ENCODE measurements at regions of chr13 and their contacts with region 1.

Region 1: GRCh38 chr13:31161828-31162590 is at the start of gene HSPH1:
- DNase-seq: peak; percentile 95 to 100 (median 99)
- ATAC-seq: peak; percentile 91
- H3K4me3 ChIP-seq: peak within 1 kb of the TSS; percentile 89
- H3K4me3 Mint-ChIP-seq: peak within 1 kb of the TSS; percentile 92 to 98 (median 94)
- H3K27ac ChIP-seq: peak within 1 kb of the TSS; percentile 96
- H3K27ac Mint-ChIP-seq: peak within 1 kb of the TSS; percentile 98 to 99 (median 99)
- H3K4me1 ChIP-seq: peaks cover 22 to 26% of the 10 kb centered on the region in 2 donors
- H3K4me1 Mint-ChIP-seq: peaks cover 23 to 52% (median 47%) of the 10 kb centered on the region in 7 donors
- H3K27me3 ChIP-seq: no peaks in the 10 kb centered on the region
- H3K27me3 Mint-ChIP-seq: peaks cover 0 to 3% (median 0%) of the 10 kb centered on the region in 5 donors
- total RNA-seq, gene HSPH1: 65.5 to 154 (median 107) TPM

Region 2: GRCh38 chr13:29595380-29596063 is 1566.5 kb before region 1 on chr13 and contains the start of gene SLC7A1:
- CTCF ChIA-PET with region 1: no interaction called
- POLR2A ChIA-PET with region 1: no interaction called
- intact Hi-C with region 1: loop called (anchors 1 to 2 kb)
- DNase-seq: peak; percentile 74 to 93 (median 85)
- ATAC-seq: peak; percentile 95
- H3K4me3 ChIP-seq: peak within 1 kb of the TSS; percentile 73
- H3K4me3 Mint-ChIP-seq: peak within 1 kb of the TSS; percentile 88 to 94 (median 90)
- H3K27ac ChIP-seq: peak within 1 kb of the TSS; percentile 82
- H3K27ac Mint-ChIP-seq: peak within 1 kb of the TSS; percentile 74 to 96 (median 87)
- H3K4me1 ChIP-seq: peaks cover 6 to 7% of the 10 kb centered on the region in 2 donors
- H3K4me1 Mint-ChIP-seq: peaks cover 26 to 49% (median 43%) of the 10 kb centered on the region in 7 donors
- H3K27me3 ChIP-seq: no peaks in the 10 kb centered on the region
- H3K27me3 Mint-ChIP-seq: peaks cover 0 to 3% (median 2%) of the 10 kb centered on the region in 5 donors
- total RNA-seq, gene SLC7A1: 12.2 to 63.8 (median 28.2) TPM

Region 3: GRCh38 chr13:30306762-30307193 is 855.2 kb before region 1 on chr13:
- CTCF ChIA-PET with region 1: no interaction called
- POLR2A ChIA-PET with region 1: no interaction called
- intact Hi-C with region 1: loop called in 1 of 2 experiments (anchors 2 kb)
- DNase-seq: peak; percentile 78 to 91 (median 88)
- ATAC-seq: peak; percentile 95
- H3K4me3 ChIP-seq: peak overlapping the region; percentile 96
- H3K4me3 Mint-ChIP-seq: peak overlapping the region; percentile 79 to 92 (median 89)
- H3K27ac ChIP-seq: peak overlapping the region; percentile 78
- H3K27ac Mint-ChIP-seq: peak overlapping the region in 8 of 9 donors; percentile 37 to 89 (median 82)
- H3K4me1 ChIP-seq: peaks cover 0 to 4% of the 10 kb centered on the region in 2 donors
- H3K4me1 Mint-ChIP-seq: peaks cover 0 to 48% (median 7%) of the 10 kb centered on the region in 7 donors
- H3K27me3 ChIP-seq: no peaks in the 10 kb centered on the region
- H3K27me3 Mint-ChIP-seq: no peaks in the 10 kb centered on the region

Region 4: DNA sequence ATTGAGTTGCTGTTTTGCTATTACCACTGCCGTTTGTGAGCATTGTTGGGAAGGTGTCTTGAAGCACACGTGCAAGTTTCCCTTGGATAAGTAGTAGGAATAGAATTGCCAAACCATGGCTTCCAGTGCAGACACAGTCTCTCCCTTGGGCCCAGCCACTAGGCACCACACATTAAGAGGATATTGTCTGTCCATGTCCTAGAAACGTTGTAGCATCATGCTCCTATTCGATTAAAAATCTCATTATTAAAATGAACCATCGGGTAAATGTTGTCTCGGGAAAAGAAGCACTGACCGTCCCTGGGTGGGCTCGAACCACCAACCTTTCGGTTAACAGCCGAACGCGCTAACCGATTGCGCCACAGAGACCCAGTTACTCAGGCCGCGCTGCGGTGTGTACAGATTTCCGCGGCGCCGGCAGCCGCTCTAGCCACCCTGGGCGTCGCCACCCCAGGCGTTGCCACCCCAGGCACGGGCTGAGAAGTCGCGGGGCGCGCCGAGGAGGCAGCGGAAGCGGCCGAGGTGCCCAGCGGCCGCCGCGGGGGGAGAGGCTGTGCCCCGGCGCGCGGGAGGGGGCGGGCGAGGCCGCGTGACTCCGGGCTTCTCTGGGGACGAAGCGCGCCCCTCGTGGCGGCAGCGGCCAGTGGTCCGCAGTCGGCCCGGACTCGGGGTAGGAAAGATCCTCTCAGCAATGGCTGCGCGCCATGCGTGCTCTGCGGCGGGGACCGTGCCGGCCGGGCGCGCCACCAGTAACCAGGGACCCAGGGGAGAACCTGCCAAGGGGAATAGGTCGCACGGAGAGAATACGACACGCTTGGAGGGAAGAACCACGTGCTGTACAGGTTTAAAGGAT is 488.1 kb before region 1 on chr13:
- CTCF ChIA-PET with region 1: no interaction called
- POLR2A ChIA-PET with region 1: no interaction called
- intact Hi-C with region 1: loop called in 1 of 2 experiments (anchors 2 kb)
- DNase-seq: peak; percentile 79 to 94 (median 86)
- ATAC-seq: peak; percentile 97
- H3K4me3 ChIP-seq: peak overlapping the region; percentile 67
- H3K4me3 Mint-ChIP-seq: peak overlapping the region; percentile 72 to 90 (median 88)
- H3K27ac ChIP-seq: peak overlapping the region; percentile 38
- H3K27ac Mint-ChIP-seq: peak overlapping the region; percentile 81 to 98 (median 91)
- H3K4me1 ChIP-seq: peaks cover 0 to 5% of the 10 kb centered on the region in 2 donors
- H3K4me1 Mint-ChIP-seq: peaks cover 2 to 32% (median 15%) of the 10 kb centered on the region in 7 donors
- H3K27me3 ChIP-seq: no peaks in the 10 kb centered on the region
- H3K27me3 Mint-ChIP-seq: peaks cover 0 to 36% (median 0%) of the 10 kb centered on the region in 5 donors

Region 5: DNA sequence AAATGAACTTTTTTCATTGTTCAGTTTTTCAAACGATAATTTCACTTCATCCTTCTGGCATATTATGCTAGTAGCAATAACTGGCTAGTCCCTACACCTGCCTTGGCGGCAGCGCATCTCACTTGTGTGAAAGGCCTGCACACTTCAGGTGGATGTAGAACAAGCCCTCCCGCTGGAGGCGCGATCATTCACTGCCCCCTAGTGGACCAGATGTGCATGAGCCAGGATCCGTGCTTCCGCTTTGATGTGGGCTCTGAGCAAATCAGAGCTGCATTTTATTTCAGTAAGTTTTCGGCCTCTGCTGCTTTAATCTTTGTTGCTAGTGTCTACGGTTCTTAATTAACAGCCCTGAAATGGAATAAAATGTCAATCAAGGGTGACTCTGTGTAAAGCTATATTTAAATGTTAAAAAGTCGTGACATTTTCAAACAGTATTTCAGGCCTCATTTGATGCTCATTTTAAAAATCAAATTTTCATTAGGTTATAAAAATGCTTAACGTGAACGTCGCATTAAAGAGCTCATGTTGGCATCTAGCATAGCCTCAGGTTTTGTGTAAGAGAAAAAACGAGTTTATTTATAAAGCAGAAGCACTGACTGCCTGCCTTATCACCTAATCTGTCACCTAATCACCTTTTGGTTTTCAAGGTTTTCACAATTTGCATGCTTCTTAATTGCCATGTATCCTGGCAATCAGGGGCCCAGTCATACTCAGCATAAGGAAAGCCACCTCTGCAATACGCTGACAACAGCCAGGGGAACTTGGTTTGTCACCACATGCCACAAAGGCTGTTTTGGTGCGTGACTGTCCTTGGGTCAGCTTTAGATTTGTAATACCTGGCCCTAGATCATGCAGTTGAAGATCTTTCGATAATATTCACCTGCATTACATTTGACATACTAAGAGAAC is 117.4 kb before region 1 on chr13:
- CTCF ChIA-PET with region 1: no interaction called
- POLR2A ChIA-PET with region 1: no interaction called
- intact Hi-C with region 1: loop called (anchors 1 to 2 kb)
- DNase-seq: peak; percentile 54 to 79 (median 75)
- ATAC-seq: peak; percentile 95
- H3K4me3 ChIP-seq: no peak overlapping the region
- H3K4me3 Mint-ChIP-seq: peak overlapping the region in 9 of 10 donors; percentile 19 to 81 (median 52)
- H3K27ac ChIP-seq: no peak overlapping the region
- H3K27ac Mint-ChIP-seq: peak overlapping the region in 5 of 9 donors; percentile 7 to 90 (median 46)
- H3K4me1 ChIP-seq: peaks cover 22 to 30% of the 10 kb centered on the region in 2 donors
- H3K4me1 Mint-ChIP-seq: peaks cover 22 to 52% (median 40%) of the 10 kb centered on the region in 7 donors
- H3K27me3 ChIP-seq: no peaks in the 10 kb centered on the region
- H3K27me3 Mint-ChIP-seq: peaks cover 0 to 24% (median 5%) of the 10 kb centered on the region in 5 donors

Region 6: GRCh38 chr13:31174018-31174417 is 12.0 kb after region 1 on chr13:
- CTCF ChIA-PET with region 1: no interaction called
- POLR2A ChIA-PET with region 1: no interaction called
- intact Hi-C with region 1: loop called in 1 of 2 experiments (anchors 1 kb)
- DNase-seq: no peak
- ATAC-seq: no peak
- H3K4me3 ChIP-seq: no peak overlapping the region
- H3K4me3 Mint-ChIP-seq: no peak overlapping the region
- H3K27ac ChIP-seq: no peak overlapping the region
- H3K27ac Mint-ChIP-seq: no peak overlapping the region
- H3K4me1 ChIP-seq: no peaks in the 10 kb centered on the region
- H3K4me1 Mint-ChIP-seq: peaks cover 0 to 18% (median 4%) of the 10 kb centered on the region in 7 donors
- H3K27me3 ChIP-seq: no peaks in the 10 kb centered on the region
- H3K27me3 Mint-ChIP-seq: peaks cover 10 to 21% (median 15%) of the 10 kb centered on the region in 5 donors

Region 7: GRCh38 chr13:31352467-31352866 is 190.5 kb after region 1 on chr13:
- CTCF ChIA-PET with region 1: no interaction called
- POLR2A ChIA-PET with region 1: no interaction called
- intact Hi-C with region 1: no loop called
- DNase-seq: no peak
- ATAC-seq: no peak
- H3K4me3 ChIP-seq: no peak overlapping the region
- H3K4me3 Mint-ChIP-seq: no peak overlapping the region
- H3K27ac ChIP-seq: no peak overlapping the region
- H3K27ac Mint-ChIP-seq: no peak overlapping the region
- H3K4me1 ChIP-seq: no peaks in the 10 kb centered on the region
- H3K4me1 Mint-ChIP-seq: no peaks in the 10 kb centered on the region
- H3K27me3 ChIP-seq: no peaks in the 10 kb centered on the region
- H3K27me3 Mint-ChIP-seq: peaks cover 4 to 38% (median 20%) of the 10 kb centered on the region in 5 donors

Region 8: GRCh38 chr13:31846182-31846950 is 684.4 kb after region 1 on chr13:
- CTCF ChIA-PET with region 1: no interaction called
- POLR2A ChIA-PET with region 1: no interaction called
- intact Hi-C with region 1: no loop called
- DNase-seq: peak in 7 of 9 donors; percentile 1 to 86 (median 14)
- ATAC-seq: peak; percentile 96
- H3K4me3 ChIP-seq: no peak overlapping the region
- H3K4me3 Mint-ChIP-seq: peak overlapping the region; percentile 47 to 91 (median 74)
- H3K27ac ChIP-seq: no peak overlapping the region
- H3K27ac Mint-ChIP-seq: peak overlapping the region in 1 of 9 donors; percentile 43
- H3K4me1 ChIP-seq: no peaks in the 10 kb centered on the region
- H3K4me1 Mint-ChIP-seq: peaks cover 0 to 19% (median 11%) of the 10 kb centered on the region in 7 donors
- H3K27me3 ChIP-seq: peaks cover 0 to 6% of the 10 kb centered on the region in 2 donors
- H3K27me3 Mint-ChIP-seq: peaks cover 23 to 75% (median 64%) of the 10 kb centered on the region in 5 donors

Region 9: DNA sequence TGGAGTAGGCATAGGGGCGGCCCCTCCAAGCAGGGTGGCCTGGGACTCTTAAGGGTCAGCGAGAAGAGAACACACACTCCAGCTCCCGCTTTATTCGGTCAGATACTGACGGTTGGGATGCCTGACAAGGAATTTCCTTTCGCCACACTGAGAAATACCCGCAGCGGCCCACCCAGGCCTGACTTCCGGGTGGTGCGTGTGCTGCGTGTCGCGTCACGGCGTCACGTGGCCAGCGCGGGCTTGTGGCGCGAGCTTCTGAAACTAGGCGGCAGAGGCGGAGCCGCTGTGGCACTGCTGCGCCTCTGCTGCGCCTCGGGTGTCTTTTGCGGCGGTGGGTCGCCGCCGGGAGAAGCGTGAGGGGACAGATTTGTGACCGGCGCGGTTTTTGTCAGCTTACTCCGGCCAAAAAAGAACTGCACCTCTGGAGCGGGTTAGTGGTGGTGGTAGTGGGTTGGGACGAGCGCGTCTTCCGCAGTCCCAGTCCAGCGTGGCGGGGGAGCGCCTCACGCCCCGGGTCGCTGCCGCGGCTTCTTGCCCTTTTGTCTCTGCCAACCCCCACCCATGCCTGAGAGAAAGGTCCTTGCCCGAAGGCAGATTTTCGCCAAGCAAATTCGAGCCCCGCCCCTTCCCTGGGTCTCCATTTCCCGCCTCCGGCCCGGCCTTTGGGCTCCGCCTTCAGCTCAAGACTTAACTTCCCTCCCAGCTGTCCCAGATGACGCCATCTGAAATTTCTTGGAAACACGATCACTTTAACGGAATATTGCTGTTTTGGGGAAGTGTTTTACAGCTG is 1153.4 kb after region 1 on chr13 and contains the starts of genes BRCA2 and ZAR1L:
- CTCF ChIA-PET with region 1: no interaction called
- POLR2A ChIA-PET with region 1: no interaction called
- intact Hi-C with region 1: loop called in 1 of 2 experiments (anchors 5 kb)
- DNase-seq: peak; percentile 79 to 90 (median 86)
- ATAC-seq: peak; percentile 94
- H3K4me3 ChIP-seq: peak within 1 kb of the TSS; percentile 94
- H3K4me3 Mint-ChIP-seq: peak within 1 kb of the TSS; percentile 92 to 98 (median 96)
- H3K27ac ChIP-seq: peak within 1 kb of the TSS; percentile 99
- H3K27ac Mint-ChIP-seq: peak within 1 kb of the TSS; percentile 98 to 100 (median 100)
- H3K4me1 ChIP-seq: peaks cover 7 to 8% of the 10 kb centered on the region in 2 donors
- H3K4me1 Mint-ChIP-seq: peaks cover 5 to 43% (median 9%) of the 10 kb centered on the region in 7 donors
- H3K27me3 ChIP-seq: no peaks in the 10 kb centered on the region
- H3K27me3 Mint-ChIP-seq: no peaks in the 10 kb centered on the region
- total RNA-seq, gene BRCA2: 3.2 to 19.9 (median 4.3) TPM
- total RNA-seq, gene ZAR1L: not detected